Mammary epithelial cell (primary cell): ENCODE measurements at regions of chr6 and their contacts with region 1.

Region 1: GRCh38 chr6:106913676-106914280 is 60.8 kb downstream of the CD24 start:
- DNase-seq: peak; percentile 89
- H3K4me3 ChIP-seq: no peak overlapping the region
- H3K27ac ChIP-seq: no peak overlapping the region
- H3K4me1 ChIP-seq: peaks cover 4% of the 10 kb centered on the region
- H3K27me3 ChIP-seq: no peaks in the 10 kb centered on the region
- CTCF ChIP-seq: no peak

Region 2: DNA sequence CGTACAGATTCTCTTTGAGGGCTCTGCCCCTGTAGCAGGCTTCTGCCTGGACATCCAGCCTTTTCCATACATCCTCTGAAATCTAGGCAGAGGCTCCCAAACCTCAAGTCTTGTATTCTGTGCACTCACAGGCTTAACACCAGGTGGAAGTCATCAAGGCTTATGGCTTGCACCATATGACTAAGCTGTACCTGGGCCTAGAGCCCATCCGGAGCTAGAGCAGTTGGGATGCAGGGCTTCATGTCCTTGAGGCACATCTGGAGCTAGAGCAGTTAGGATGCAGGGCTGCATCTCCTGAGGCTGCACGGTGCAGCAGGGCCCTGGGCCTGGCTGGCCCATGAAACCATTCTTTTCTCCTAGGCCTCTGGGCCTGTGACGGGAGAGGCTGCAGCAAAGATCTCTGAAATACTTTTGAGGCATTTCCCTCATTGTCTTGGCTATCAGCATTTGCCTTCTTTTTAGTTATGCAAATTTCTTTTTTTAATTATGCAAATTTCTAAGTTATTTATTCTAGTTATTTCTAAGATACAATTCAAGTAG is 37.9 kb before region 1 on chr6:
- CTCF ChIA-PET with region 1: no interaction called
- dilution Hi-C with region 1: loop called (anchors 5 kb)
- in situ Hi-C with region 1: no loop called
- intact Hi-C with region 1: no loop called
- DNase-seq: no peak
- H3K4me3 ChIP-seq: no peak overlapping the region
- H3K27ac ChIP-seq: no peak overlapping the region
- H3K4me1 ChIP-seq: peaks cover 24% of the 10 kb centered on the region
- H3K27me3 ChIP-seq: no peaks in the 10 kb centered on the region
- CTCF ChIP-seq: no peak

Region 3: DNA sequence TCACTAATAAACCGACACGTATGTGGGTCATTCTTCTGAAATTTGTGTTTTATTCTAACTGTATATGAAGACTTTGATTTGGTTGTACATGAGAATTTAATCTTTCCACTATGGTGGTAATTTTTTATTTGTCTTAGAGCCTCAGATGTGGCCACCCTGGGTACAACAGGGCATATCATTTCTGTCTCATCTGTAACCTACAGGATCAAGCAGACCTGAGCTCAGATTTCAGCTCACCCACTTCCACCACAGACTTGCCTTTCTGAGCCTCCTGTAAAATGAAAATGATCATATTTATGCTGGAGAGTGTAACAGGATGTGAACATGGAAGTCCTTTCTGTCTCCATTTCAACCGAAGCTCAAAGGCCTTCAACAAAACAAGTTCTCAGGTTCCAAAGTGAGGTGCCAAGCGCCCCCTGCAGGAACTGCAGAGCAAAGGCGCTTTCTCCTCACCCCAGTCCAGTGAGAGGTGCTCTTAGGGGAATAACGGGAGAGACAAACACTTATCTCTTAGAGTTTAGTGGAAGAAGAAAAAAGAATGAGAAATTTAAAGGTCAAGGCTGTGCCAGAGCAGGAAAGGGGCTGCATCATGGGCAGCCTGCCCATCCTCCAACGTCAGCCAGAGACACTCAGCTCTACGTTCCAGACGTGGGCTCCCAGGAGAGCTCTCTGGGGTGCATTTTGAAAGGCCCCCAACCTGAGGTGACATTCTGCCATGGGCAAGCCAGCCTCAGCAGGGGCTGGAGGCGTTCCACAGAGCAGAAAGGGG is 83.8 kb after region 1 on chr6:
- CTCF ChIA-PET with region 1: no interaction called
- dilution Hi-C with region 1: loop called (anchors 5 kb)
- in situ Hi-C with region 1: no loop called
- intact Hi-C with region 1: no loop called
- DNase-seq: peak; percentile 49
- H3K4me3 ChIP-seq: no peak overlapping the region
- H3K27ac ChIP-seq: no peak overlapping the region
- H3K4me1 ChIP-seq: no peaks in the 10 kb centered on the region
- H3K27me3 ChIP-seq: no peaks in the 10 kb centered on the region
- CTCF ChIP-seq: peak; percentile 95 to 96

Region 4: GRCh38 chr6:107124934-107125348 is 211.2 kb after region 1 on chr6:
- CTCF ChIA-PET with region 1: interaction called, 12 read pairs
- dilution Hi-C with region 1: no loop called
- in situ Hi-C with region 1: no loop called
- intact Hi-C with region 1: no loop called
- DNase-seq: no peak
- H3K4me3 ChIP-seq: no peak overlapping the region
- H3K27ac ChIP-seq: no peak overlapping the region
- H3K4me1 ChIP-seq: no peaks in the 10 kb centered on the region
- H3K27me3 ChIP-seq: no peaks in the 10 kb centered on the region
- CTCF ChIP-seq: no peak